Activated CD4-positive, alpha-beta T cell treated with anti-CD3 and anti-CD28 coated beads, Interleukin-2, amount 10 ng/mL, durations not matched to agents 24 days and 14 days (primary cell): ENCODE measurements at regions of chr22 and their contacts with region 1.

Region 1: GRCh38 chr22:49838771-49839717 is 11.4 kb upstream of the BRD1 start:
- DNase-seq: peak; percentile 96
- H3K4me3 Mint-ChIP-seq: peak overlapping the region; percentile 90
- H3K27ac Mint-ChIP-seq: peak overlapping the region; percentile 96
- H3K4me1 Mint-ChIP-seq: peaks cover 26% of the 10 kb centered on the region
- H3K27me3 Mint-ChIP-seq: peaks cover 2% of the 10 kb centered on the region

Region 2: DNA sequence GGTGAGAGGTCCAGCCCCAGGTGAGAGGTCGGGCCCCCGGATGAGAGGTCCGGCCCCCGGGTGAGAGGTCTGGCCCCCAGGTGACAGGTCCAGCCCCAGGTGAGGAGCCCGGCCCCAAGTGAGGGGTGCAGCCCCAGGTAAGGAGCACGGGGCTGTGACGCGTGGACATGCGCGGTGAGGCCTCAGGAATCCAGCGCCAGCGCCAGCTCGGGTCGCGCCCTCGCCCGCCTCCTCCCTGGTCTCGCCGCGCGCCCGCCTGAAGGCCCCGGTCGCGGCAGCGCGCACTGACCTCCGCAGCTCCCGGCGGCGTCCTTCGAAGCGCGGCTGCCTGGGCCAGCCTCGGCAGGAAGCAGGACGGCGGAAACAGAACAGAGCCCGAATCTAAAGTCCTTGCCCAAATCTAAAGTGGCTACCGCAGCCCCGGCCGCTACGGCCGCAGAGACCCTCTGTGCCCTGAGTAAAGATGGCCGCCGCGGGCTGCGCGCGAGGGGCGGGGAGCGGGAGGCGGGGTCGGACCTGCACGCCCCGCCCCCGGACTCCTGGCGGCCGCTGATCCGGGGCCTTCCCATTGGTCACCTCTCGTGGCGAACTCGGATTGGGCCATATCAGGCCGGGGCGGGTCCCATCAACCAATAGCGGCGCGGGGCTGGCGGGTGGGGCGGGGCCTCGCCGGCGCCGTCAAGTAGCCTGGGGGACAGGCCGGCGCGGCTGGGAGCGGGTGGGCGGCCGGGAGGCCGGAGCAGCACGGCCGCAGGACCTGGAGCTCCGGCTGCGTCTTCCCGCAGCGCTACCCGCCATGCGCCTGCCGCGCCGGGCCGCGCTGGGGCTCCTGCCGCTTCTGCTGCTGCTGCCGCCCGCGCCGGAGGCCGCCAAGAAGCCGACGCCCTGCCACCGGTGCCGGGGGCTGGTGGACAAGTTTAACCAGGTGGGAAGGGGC is 79.2 kb after region 1 on chr22 and contains the starts of genes ALG12 and CRELD2:
- intact Hi-C with region 1: loop called (anchors 5 kb)
- DNase-seq: peak; percentile 99
- H3K4me3 Mint-ChIP-seq: peak within 1 kb of the TSS; percentile 81
- H3K27ac Mint-ChIP-seq: peak within 1 kb of the TSS; percentile 85
- H3K4me1 Mint-ChIP-seq: peaks cover 18% of the 10 kb centered on the region
- H3K27me3 Mint-ChIP-seq: no peaks in the 10 kb centered on the region
- total RNA-seq, gene ALG12: 13.8 and 17.9 TPM in 2 replicates
- total RNA-seq, gene CRELD2: 46.8 and 47.4 TPM in 2 replicates